Common myeloid progenitor, CD34-positive (primary cell): ENCODE measurements at regions of chr7 and their contacts with region 1.

Region 1: GRCh38 chr7:107168233-107169119 is at the start of gene HBP1:
- DNase-seq: peak; percentile 100
- H3K4me3 ChIP-seq: peak within 1 kb of the TSS; percentile 74 to 98 (median 90)
- H3K27ac ChIP-seq: peak within 1 kb of the TSS; percentile 97 to 99
- H3K4me1 ChIP-seq: peaks cover 14 to 27% (median 16%) of the 10 kb centered on the region in 4 experiments
- H3K27me3 ChIP-seq: no peaks in the 10 kb centered on the region

Region 2: GRCh38 chr7:107056728-107057473 is 111.6 kb before region 1 on chr7:
- CTCF ChIA-PET with region 1: no interaction called
- POLR2A ChIA-PET with region 1: no interaction called
- DNase-seq: no peak
- H3K4me3 ChIP-seq: no peak overlapping the region
- H3K27ac ChIP-seq: no peak overlapping the region
- H3K4me1 ChIP-seq: no peaks in the 10 kb centered on the region
- H3K27me3 ChIP-seq: no peaks in the 10 kb centered on the region

Region 3: GRCh38 chr7:107180378-107180777 is 11.9 kb after region 1 on chr7:
- CTCF ChIA-PET with region 1: interaction called, 12 read pairs
- POLR2A ChIA-PET with region 1: interaction called, 5 read pairs
- DNase-seq: peak; percentile 41 to 80 (median 76)
- H3K4me3 ChIP-seq: no peak overlapping the region
- H3K27ac ChIP-seq: no peak overlapping the region
- H3K4me1 ChIP-seq: peaks cover 0 to 14% (median 5%) of the 10 kb centered on the region in 4 experiments
- H3K27me3 ChIP-seq: no peaks in the 10 kb centered on the region